ENCODE measurements at regions of chr18 and their contacts with region 1.

Region 1: DNA sequence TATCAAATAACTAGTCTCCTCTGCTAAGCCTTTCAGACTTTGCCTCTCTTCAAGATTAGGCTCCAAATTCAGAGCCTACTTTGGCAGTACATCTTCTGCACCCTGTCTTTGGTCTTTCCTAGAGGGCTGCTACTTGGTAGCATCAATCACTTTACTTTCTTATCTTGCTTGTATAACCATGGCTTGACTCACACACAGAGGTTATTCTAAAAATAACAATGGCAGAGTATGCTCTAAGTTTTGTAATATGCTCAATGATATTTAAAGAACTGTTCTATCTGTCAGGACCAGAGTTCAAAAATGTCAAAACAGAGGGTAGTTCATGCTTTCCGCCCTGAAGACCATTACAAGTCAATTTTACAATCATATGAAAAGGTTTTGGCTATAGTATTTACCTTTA is 27.7 kb downstream of the THOC1 start:
- DNase-seq: no peak
- ATAC-seq: no peak
- H3K4me3 ChIP-seq: no peak overlapping the region
- H3K27ac ChIP-seq: no peak overlapping the region
- H3K4me1 ChIP-seq: no peaks in the 10 kb centered on the region
- H3K27me3 ChIP-seq: no peaks in the 10 kb centered on the region
- CTCF ChIP-seq: no peak
- POLR2A ChIP-seq: no peak

Region 2: GRCh38 chr18:179499-179898 is 60.7 kb before region 1 on chr18:
- intact Hi-C with region 1: loop called in 1 of 2 experiments (anchors 5 kb)
- DNase-seq: no peak
- ATAC-seq: no peak
- H3K4me3 ChIP-seq: no peak overlapping the region
- H3K27ac ChIP-seq: no peak overlapping the region
- H3K4me1 ChIP-seq: no peaks in the 10 kb centered on the region
- H3K27me3 ChIP-seq: no peaks in the 10 kb centered on the region
- CTCF ChIP-seq: no peak
- POLR2A ChIP-seq: no peak

Region 3: GRCh38 chr18:346610-347009 is 106.4 kb after region 1 on chr18:
- intact Hi-C with region 1: no loop called
- DNase-seq: no peak
- ATAC-seq: no peak
- H3K4me3 ChIP-seq: no peak overlapping the region
- H3K27ac ChIP-seq: no peak overlapping the region
- H3K4me1 ChIP-seq: no peaks in the 10 kb centered on the region
- H3K27me3 ChIP-seq: no peaks in the 10 kb centered on the region
- CTCF ChIP-seq: no peak
- POLR2A ChIP-seq: no peak

Region 4: DNA sequence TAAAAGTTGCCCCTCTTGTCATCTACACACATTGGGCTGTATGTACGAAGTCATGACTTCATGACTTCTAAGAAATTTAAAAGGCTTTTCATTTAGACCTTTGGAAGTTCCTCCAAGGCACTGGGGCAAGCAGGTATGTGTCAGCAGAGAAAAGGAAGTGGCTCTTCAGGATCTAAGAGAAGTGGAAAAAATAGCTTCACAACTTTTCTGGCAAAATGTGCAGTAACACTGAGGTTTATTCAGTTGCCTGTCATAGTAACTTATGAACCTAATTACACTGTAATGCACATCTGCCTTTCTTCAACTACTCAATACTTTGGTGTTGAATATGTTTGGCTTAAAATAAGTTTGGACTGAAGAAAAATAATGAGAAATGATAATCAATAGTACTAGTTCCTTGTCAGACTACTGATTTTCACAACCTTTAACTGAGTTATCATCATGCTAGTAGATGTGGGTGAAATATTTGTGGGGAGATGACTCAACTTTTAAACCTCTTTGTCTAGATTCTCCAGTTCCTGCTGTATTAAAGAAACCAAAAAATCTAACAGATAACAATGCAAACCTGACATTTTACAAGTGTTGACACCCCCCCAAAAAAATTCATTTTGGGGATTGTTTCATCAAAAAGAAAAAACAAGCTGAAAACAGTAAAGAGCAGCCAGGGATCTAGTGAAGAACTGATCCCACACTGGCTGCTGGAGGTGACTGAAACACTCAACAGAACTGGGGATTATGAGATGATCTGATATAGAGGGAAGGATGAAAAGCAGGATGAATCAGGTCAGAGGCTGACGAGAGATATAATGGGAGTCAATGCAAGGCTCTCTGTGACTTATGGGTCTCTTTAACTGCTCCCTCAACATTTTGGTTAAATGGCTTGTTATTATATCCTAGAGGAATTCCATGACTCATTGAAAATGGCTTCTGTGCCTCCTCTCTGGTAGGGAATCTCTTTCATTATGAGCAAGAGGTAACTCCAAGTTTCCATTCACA is 175.7 kb after region 1 on chr18:
- intact Hi-C with region 1: no loop called
- DNase-seq: no peak
- ATAC-seq: no peak
- H3K4me3 ChIP-seq: no peak overlapping the region
- H3K27ac ChIP-seq: no peak overlapping the region
- H3K4me1 ChIP-seq: no peaks in the 10 kb centered on the region
- H3K27me3 ChIP-seq: no peaks in the 10 kb centered on the region
- CTCF ChIP-seq: no peak
- POLR2A ChIP-seq: no peak